Activated B cell treated with CpG ODN at 0.5 μM for 24 hours (primary cell): ENCODE measurements at regions of chr3 and their contacts with region 1.

Region 1: GRCh38 chr3:138834359-138835212 is at the start of gene PIK3CB:
- DNase-seq: peak; percentile 85
- ATAC-seq: peak; percentile 94
- H3K4me3 Mint-ChIP-seq: peak within 1 kb of the TSS; percentile 92
- H3K27ac Mint-ChIP-seq: peak within 1 kb of the TSS; percentile 95
- H3K4me1 Mint-ChIP-seq: peaks cover 24% of the 10 kb centered on the region
- H3K27me3 Mint-ChIP-seq: no peaks in the 10 kb centered on the region
- CTCF ChIP-seq: no peak
- total RNA-seq, gene PIK3CB: 19.9 and 21.9 TPM in 2 replicates

Region 2: GRCh38 chr3:138608322-138609135 is 226.1 kb before region 1 on chr3 and contains the start of gene FAIM:
- CTCF ChIA-PET with region 1: no interaction called
- POLR2A ChIA-PET with region 1: no interaction called
- intact Hi-C with region 1: loop called (anchors 1 kb)
- DNase-seq: peak; percentile 71
- ATAC-seq: peak; percentile 75
- H3K4me3 Mint-ChIP-seq: peak within 1 kb of the TSS; percentile 87
- H3K27ac Mint-ChIP-seq: peak within 1 kb of the TSS; percentile 83
- H3K4me1 Mint-ChIP-seq: peaks cover 23% of the 10 kb centered on the region
- H3K27me3 Mint-ChIP-seq: no peaks in the 10 kb centered on the region
- CTCF ChIP-seq: no peak
- total RNA-seq, gene FAIM: 10.5 and 11.5 TPM in 2 replicates

Region 3: DNA sequence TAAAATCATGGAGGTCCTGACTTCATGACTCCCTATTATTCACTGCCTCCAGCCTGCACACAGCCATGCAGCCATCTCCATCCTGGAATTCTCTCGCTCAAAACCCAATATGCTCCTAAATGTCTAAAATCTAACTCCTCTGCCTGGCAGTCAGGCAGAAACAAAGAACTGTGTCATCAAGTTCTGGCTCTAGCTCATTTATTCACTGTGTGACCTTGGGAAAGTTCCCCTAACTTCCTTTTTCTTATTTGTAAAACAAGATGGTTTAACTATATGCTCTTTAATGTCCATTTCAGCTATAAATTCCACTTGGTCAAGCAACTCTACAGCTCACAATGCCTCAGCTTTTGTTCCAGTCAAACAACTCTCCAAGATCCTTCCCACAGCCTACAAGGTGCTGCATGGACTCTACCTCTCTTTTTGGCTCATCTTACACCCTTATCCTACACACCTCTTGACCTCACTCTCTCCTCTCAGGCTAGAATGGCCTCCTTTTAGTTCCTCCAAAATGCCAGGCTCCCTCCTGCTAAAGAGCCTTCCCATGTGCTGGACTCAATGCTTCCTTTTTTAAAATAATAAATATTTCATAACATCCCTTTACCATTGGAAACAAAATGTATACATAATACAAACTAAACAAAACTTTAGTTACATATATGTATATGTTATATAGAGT is 16.3 kb before region 1 on chr3:
- CTCF ChIA-PET with region 1: no interaction called
- POLR2A ChIA-PET with region 1: no interaction called
- intact Hi-C with region 1: no loop called
- DNase-seq: no peak
- ATAC-seq: no peak
- H3K4me3 Mint-ChIP-seq: no peak overlapping the region
- H3K27ac Mint-ChIP-seq: no peak overlapping the region
- H3K4me1 Mint-ChIP-seq: peaks cover 20% of the 10 kb centered on the region
- H3K27me3 Mint-ChIP-seq: no peaks in the 10 kb centered on the region
- CTCF ChIP-seq: no peak

Region 4: DNA sequence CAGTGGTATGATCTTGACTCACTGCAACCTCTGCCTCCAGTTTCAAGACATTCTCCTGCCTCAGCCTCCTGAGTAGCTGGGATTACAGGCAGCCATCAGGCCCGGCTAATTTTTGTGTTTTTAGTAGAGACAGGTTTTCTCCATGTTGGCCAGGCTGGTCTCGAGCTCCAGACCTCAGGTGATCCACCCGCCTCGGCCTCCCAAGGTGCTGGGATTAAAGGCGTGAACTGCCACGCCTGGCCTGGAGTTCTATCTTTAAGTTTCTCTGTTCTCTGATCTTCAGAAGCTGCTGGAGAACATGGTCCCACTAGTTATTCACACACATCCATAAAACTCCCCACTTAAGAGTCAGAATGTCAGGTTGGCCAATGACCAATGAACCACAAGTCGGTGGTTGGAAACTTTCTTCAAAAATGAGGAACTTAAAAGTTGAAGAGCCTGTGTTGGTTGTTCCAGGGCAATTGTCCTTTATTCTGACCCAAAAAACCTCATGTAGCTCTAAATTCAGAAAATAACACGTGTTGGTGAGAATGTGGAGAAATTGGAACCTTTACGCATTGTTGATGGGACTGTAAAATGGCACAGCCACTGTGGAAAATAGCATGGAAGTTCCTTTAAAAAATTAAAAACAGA is 56.1 kb after region 1 on chr3:
- CTCF ChIA-PET with region 1: no interaction called
- POLR2A ChIA-PET with region 1: no interaction called
- intact Hi-C with region 1: loop called (anchors 2 kb)
- DNase-seq: no peak
- ATAC-seq: peak; percentile 82
- H3K4me3 Mint-ChIP-seq: peak overlapping the region; percentile 13
- H3K27ac Mint-ChIP-seq: peak overlapping the region; percentile 66
- H3K4me1 Mint-ChIP-seq: peaks cover 12% of the 10 kb centered on the region
- H3K27me3 Mint-ChIP-seq: no peaks in the 10 kb centered on the region
- CTCF ChIP-seq: no peak